ENCODE measurements at regions of chr17 and their contacts with region 1.

Region 1: GRCh38 chr17:76909971-76910760 is 42.0 kb downstream of the MGAT5B start:
- DNase-seq: peak; percentile 7
- ATAC-seq: peak; percentile 79
- H3K4me3 ChIP-seq: no peak overlapping the region
- H3K27ac ChIP-seq: no peak overlapping the region
- H3K4me1 ChIP-seq: no peaks in the 10 kb centered on the region
- H3K27me3 ChIP-seq: peaks cover 5% of the 10 kb centered on the region; the same call in 1 of the 2 replicates
- CTCF ChIP-seq: no peak
- POLR2A ChIP-seq: no peak
- RAD21 ChIP-seq: no peak

Region 2: DNA sequence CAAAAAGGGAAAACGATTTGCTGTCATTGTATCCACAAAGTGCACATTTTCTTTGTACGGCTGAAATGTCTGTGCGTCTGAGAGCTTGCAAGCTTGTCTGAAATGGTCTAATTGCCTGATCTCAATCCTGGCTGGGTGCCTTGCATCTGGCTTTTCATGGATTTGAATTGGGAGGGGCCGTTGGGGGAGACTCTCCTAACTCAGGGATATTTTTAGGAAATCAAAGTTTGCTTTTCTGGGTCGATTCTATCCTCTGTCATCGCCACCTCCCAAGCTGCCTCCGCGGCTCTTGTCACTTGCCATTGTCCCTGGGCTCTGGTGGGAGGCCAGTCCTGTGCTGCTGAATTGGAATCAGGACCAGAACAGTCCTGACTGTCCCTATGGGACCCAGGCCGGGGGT is 75.3 kb before region 1 on chr17:
- CTCF ChIA-PET with region 1: no interaction called
- POLR2A ChIA-PET with region 1: no interaction called
- RAD21 ChIA-PET with region 1: no interaction called
- intact Hi-C with region 1: loop called (anchors 10 kb)
- DNase-seq: no peak
- ATAC-seq: no peak
- H3K4me3 ChIP-seq: no peak overlapping the region
- H3K27ac ChIP-seq: no peak overlapping the region
- H3K4me1 ChIP-seq: peaks cover 0 to 5% of the 10 kb centered on the region in 2 experiments; a peak in 1 of 4 replicates
- H3K27me3 ChIP-seq: peaks cover 12% of the 10 kb centered on the region; the same call in 1 of the 2 replicates
- CTCF ChIP-seq: no peak
- POLR2A ChIP-seq: no peak
- RAD21 ChIP-seq: no peak

Measured in HCT116 (cell line).